ENCODE measurements at regions of chr15 and their contacts with region 1.

Region 1: DNA sequence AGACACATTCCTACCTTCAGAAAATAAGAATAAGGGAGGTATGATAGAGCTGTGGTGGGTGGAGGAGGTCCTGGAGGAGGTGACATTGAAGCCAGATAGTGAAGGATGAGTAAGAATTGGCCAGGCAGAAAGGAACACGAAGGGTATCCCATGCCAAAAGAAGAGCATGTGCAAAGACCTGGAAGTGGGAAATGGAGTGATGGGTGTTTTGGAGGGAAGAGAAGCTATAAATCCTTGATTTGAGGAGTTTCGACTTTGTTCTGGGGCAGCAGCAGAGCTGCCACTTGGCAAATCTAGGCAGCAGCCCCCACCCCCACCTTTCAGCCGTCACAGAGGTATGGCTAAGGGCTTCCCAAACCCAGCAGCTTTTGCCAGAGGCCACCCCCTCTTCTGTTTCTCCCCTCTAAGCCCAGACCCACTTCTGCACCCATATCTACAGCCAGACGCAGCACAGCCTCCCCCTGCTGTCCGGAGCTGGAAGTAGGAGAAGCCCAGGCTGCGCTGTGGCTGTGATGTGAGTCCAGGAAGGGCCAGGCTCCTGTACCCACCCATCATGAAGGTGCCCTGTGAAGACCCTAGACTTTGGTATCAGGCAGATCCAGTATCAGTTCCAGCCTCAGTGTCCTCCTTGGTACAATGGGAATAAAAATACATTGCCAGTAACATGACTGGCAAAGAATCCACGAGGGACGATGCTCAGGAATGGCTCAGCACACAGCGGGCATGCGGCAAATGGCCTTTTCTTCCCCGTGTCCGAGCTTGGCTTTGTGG is 188.7 kb upstream of the LINGO1 start:
- DNase-seq: peak in 3 of 5 donors; percentile 33 to 57 (median 52)
- H3K4me3 ChIP-seq: no peak overlapping the region
- H3K27ac ChIP-seq: no peak overlapping the region
- H3K4me1 ChIP-seq: no peaks in the 10 kb centered on the region
- H3K27me3 ChIP-seq: no peaks in the 10 kb centered on the region
- CTCF ChIP-seq: no peak
- EP300 ChIP-seq: no peak
- POLR2A ChIP-seq: no peak

Region 2: GRCh38 chr15:77633134-77633912 is 188.1 kb before region 1 on chr15:
- intact Hi-C with region 1: loop called in 1 of 4 experiments (anchors 5 kb)
- DNase-seq: peak; percentile 78 to 91 (median 89)
- H3K4me3 ChIP-seq: peak overlapping the region; percentile 44
- H3K27ac ChIP-seq: no peak overlapping the region
- H3K4me1 ChIP-seq: peaks cover 7% of the 10 kb centered on the region
- H3K27me3 ChIP-seq: peaks cover 3% of the 10 kb centered on the region
- CTCF ChIP-seq: peak; percentile 97 to 98 (median 98)
- EP300 ChIP-seq: no peak
- POLR2A ChIP-seq: no peak

Region 3: DNA sequence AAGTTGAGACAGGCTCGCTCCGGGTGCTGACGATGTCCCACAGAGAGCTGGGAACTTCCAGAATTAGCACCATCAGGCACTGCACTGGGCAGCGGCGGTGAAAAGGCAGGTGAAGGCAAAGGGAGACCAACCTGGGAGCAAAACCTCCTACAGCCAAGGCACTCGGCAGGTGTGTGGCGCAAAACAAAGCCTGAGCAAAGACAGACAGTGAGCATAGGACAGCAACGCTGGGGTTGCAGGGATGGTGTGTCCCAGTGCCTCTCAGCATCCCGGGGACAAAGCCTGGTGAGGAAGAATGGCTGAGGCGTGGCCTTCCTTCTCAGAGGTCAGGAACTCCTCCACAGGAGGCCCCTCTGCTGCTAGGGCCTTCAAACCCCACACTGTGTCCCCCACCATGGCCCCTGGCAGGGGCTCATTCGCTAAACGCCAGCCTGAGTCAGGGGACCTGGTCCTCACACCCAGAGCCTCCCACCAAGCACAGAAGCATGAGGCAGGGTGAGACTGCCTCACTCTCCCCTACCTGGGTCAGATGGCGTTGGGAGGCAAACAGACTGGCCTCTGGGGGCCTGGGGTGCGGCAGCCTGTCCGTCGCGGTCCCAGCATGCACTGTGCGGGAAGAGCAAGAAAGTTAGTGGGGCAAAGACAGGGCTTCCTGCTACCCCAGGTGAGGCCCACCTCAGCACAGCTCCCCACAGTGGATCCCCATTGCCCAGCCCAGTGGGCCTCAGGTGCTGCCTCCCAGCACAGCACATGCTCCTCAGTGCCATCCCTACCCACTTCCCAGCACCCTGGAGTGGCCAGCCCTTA is 144.6 kb before region 1 on chr15:
- intact Hi-C with region 1: no loop called
- DNase-seq: no peak
- H3K4me3 ChIP-seq: no peak overlapping the region
- H3K27ac ChIP-seq: no peak overlapping the region
- H3K4me1 ChIP-seq: no peaks in the 10 kb centered on the region
- H3K27me3 ChIP-seq: no peaks in the 10 kb centered on the region
- CTCF ChIP-seq: no peak
- EP300 ChIP-seq: no peak
- POLR2A ChIP-seq: no peak

Region 4: DNA sequence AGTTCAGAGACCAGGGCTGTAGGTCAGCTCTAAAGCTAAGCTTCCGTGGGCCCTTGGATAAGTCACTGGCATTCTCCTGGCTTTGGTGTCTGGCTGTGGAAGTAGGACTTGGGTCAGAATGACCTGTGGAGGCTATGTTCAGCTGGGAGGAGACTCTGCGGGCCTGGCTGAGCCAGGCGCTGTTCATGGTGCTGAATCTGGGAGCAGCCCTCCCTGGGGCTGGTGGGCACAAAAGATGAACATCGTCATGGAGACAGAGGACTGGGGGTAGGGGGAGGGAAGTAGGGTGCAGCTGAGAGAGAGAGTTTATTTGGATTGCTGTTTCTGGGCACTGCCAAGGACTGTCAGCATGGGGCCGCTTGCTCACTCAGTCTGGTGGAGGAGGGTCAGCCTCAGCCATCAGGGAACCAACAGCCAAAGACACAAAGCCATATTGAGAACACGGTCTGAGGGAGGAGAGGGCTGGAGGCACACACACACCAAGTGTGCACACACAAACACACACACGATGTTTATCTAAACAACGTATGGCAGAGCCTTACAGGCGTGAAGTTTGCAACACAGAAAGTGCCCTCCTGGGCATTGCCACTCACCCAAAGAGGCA is 68.0 kb before region 1 on chr15:
- intact Hi-C with region 1: no loop called
- DNase-seq: peak in 2 of 5 donors; percentile 25 to 44
- H3K4me3 ChIP-seq: no peak overlapping the region
- H3K27ac ChIP-seq: no peak overlapping the region
- H3K4me1 ChIP-seq: no peaks in the 10 kb centered on the region
- H3K27me3 ChIP-seq: no peaks in the 10 kb centered on the region
- CTCF ChIP-seq: no peak
- EP300 ChIP-seq: no peak
- POLR2A ChIP-seq: no peak

Region 5: GRCh38 chr15:77966540-77967290 is 145.3 kb after region 1 on chr15:
- intact Hi-C with region 1: no loop called
- DNase-seq: peak in 2 of 5 donors; percentile 44 to 57
- H3K4me3 ChIP-seq: no peak overlapping the region
- H3K27ac ChIP-seq: no peak overlapping the region
- H3K4me1 ChIP-seq: peaks cover 1% of the 10 kb centered on the region
- H3K27me3 ChIP-seq: no peaks in the 10 kb centered on the region
- CTCF ChIP-seq: peak; percentile 59 to 81 (median 79)
- EP300 ChIP-seq: no peak
- POLR2A ChIP-seq: no peak